CD4-positive, alpha-beta memory T cell (primary cell): ENCODE measurements at regions of chr4 and their contacts with region 1.

Region 1: DNA sequence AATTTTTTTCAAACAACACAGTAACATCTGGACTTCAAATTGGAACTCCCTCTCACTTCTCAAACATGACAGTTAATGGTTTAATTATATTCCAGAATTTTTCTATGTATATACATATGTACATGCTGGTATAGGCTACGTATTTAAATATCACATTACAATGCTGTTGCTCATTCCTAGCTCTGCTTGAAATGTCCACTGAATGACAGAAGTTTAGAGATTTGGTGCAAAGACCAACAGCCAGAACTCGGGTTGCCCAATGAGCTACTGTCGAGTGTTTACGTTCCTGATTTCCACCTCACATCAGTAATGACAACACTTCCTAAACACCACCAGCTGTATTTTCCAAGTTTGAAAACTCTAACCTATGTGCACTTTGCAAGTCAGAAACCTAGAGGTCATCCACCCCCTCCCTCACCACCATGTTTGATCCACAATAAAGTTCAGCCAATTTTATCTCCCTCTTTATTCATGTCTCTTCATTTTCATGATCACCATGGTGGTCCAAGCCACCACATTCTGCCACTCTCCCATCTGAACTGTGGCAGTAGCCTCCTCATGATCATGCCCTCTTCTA is 49.3 kb upstream of the RPL34 start:
- DNase-seq: no peak
- H3K4me3 ChIP-seq: no peak overlapping the region
- H3K4me3 Mint-ChIP-seq: peak overlapping the region in 1 of 8 donors; percentile 4
- H3K27ac ChIP-seq: no peak overlapping the region
- H3K27ac Mint-ChIP-seq: peak overlapping the region in 1 of 7 donors; percentile 27
- H3K4me1 ChIP-seq: peaks cover 7% of the 10 kb centered on the region
- H3K4me1 Mint-ChIP-seq: peaks cover 2 to 9% (median 5%) of the 10 kb centered on the region in 4 donors
- H3K27me3 ChIP-seq: no peaks in the 10 kb centered on the region
- H3K27me3 Mint-ChIP-seq: peaks cover 0 to 2% of the 10 kb centered on the region in 2 donors

Region 2: DNA sequence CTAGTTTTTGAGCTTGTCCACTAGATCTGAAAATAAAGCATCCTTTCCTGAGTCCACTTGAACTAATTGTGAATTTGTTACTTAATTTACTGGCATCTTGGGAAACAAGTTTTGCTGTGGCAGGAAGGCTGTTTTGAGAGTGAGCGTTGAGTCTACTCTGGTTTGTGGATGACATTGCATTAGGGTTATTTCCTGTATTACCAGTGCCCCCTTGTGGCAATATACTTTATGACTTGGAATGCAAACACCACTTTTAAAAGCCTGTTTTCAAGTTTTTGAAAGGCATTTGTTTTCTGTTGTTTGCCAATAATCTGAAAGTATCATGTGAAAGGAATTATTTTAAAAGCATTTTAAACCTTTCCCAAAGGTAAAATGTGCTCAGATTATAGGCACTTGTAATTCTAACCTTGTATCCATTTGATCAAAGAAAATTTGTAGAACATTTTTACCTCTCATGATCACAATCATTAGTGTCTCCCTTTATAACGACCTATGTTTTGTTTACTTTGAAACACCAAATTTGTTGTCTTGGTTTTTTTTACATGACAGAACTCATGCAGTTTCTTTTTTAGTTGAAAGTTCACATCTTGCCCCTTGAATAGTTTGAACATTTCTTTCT is 657.7 kb before region 1 on chr4:
- CTCF ChIA-PET with region 1: interaction called, 5 read pairs
- POLR2A ChIA-PET with region 1: no interaction called
- intact Hi-C with region 1: loop called (anchors 1 kb)
- DNase-seq: peak; percentile 57 to 62 (median 59)
- H3K4me3 ChIP-seq: no peak overlapping the region
- H3K4me3 Mint-ChIP-seq: no peak overlapping the region
- H3K27ac ChIP-seq: no peak overlapping the region
- H3K27ac Mint-ChIP-seq: no peak overlapping the region
- H3K4me1 ChIP-seq: no peaks in the 10 kb centered on the region
- H3K4me1 Mint-ChIP-seq: peaks cover 0 to 2% (median under 1%) of the 10 kb centered on the region in 4 donors
- H3K27me3 ChIP-seq: no peaks in the 10 kb centered on the region
- H3K27me3 Mint-ChIP-seq: peaks cover 1 to 7% of the 10 kb centered on the region in 2 donors

Region 3: DNA sequence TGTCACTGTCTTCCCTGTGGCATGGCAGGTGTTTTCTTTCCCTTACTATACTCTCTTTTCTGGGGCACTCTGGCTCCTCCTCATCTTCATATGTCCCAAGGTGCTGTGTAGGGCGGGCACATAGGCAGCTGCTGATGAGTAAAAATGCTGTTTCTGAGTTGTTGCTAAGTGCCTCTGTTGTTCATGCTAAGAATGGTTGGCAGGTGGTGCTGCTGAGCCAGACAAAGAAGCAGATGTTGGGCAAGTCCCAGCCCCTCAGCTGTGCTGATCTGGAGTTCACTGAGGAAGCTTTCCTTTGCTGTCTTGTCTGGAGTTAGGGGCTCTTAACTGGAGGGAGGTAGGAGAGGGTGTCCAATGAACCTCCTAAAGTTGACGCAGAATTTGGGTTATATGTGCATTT is 540.7 kb before region 1 on chr4:
- CTCF ChIA-PET with region 1: interaction called, 55 read pairs
- POLR2A ChIA-PET with region 1: interaction called, 5 read pairs
- intact Hi-C with region 1: loop called (anchors 1 kb)
- DNase-seq: peak; percentile 62 to 75 (median 70)
- H3K4me3 ChIP-seq: no peak overlapping the region
- H3K4me3 Mint-ChIP-seq: peak overlapping the region in 5 of 8 donors; percentile 50 to 76 (median 56)
- H3K27ac ChIP-seq: no peak overlapping the region
- H3K27ac Mint-ChIP-seq: peak overlapping the region; percentile 31 to 94 (median 84)
- H3K4me1 ChIP-seq: peaks cover 25% of the 10 kb centered on the region
- H3K4me1 Mint-ChIP-seq: peaks cover 21 to 40% (median 25%) of the 10 kb centered on the region in 4 donors
- H3K27me3 ChIP-seq: no peaks in the 10 kb centered on the region
- H3K27me3 Mint-ChIP-seq: no peaks in the 10 kb centered on the region

Region 4: GRCh38 chr4:108172753-108173598 is 398.1 kb before region 1 on chr4:
- CTCF ChIA-PET with region 1: interaction called, 5 read pairs
- POLR2A ChIA-PET with region 1: interaction called, 3 read pairs
- intact Hi-C with region 1: loop called (anchors 5 kb)
- DNase-seq: peak; percentile 63 to 71 (median 69)
- H3K4me3 ChIP-seq: peak overlapping the region; percentile 61 to 79
- H3K4me3 Mint-ChIP-seq: peak overlapping the region; percentile 89 to 96 (median 90)
- H3K27ac ChIP-seq: peak overlapping the region; percentile 50
- H3K27ac Mint-ChIP-seq: peak overlapping the region; percentile 47 to 94 (median 81)
- H3K4me1 ChIP-seq: peaks cover 43% of the 10 kb centered on the region
- H3K4me1 Mint-ChIP-seq: peaks cover 28 to 50% (median 37%) of the 10 kb centered on the region in 4 donors
- H3K27me3 ChIP-seq: peaks cover 14% of the 10 kb centered on the region
- H3K27me3 Mint-ChIP-seq: peaks cover 17 to 25% of the 10 kb centered on the region in 2 donors

Region 5: GRCh38 chr4:108443585-108443984 is 127.5 kb before region 1 on chr4:
- CTCF ChIA-PET with region 1: no interaction called
- POLR2A ChIA-PET with region 1: no interaction called
- intact Hi-C with region 1: no loop called
- DNase-seq: no peak
- H3K4me3 ChIP-seq: no peak overlapping the region
- H3K4me3 Mint-ChIP-seq: no peak overlapping the region
- H3K27ac ChIP-seq: no peak overlapping the region
- H3K27ac Mint-ChIP-seq: peak overlapping the region in 1 of 7 donors; percentile 48
- H3K4me1 ChIP-seq: peaks cover 3% of the 10 kb centered on the region
- H3K4me1 Mint-ChIP-seq: peaks cover 11 to 41% (median 23%) of the 10 kb centered on the region in 4 donors
- H3K27me3 ChIP-seq: no peaks in the 10 kb centered on the region
- H3K27me3 Mint-ChIP-seq: peaks cover 0 to 1% of the 10 kb centered on the region in 2 donors

Region 6: GRCh38 chr4:108527723-108528122 is 43.4 kb before region 1 on chr4:
- CTCF ChIA-PET with region 1: interaction called, 10 read pairs
- POLR2A ChIA-PET with region 1: no interaction called
- intact Hi-C with region 1: loop called (anchors 2 kb)
- DNase-seq: peak in 4 of 5 donors; percentile 28 to 46 (median 40)
- H3K4me3 ChIP-seq: peak overlapping the region in 1 of 2 donors; percentile 15
- H3K4me3 Mint-ChIP-seq: peak overlapping the region; percentile 62 to 77 (median 70)
- H3K27ac ChIP-seq: no peak overlapping the region
- H3K27ac Mint-ChIP-seq: peak overlapping the region; percentile 30 to 87 (median 66)
- H3K4me1 ChIP-seq: peaks cover 58% of the 10 kb centered on the region
- H3K4me1 Mint-ChIP-seq: peaks cover 31 to 72% (median 57%) of the 10 kb centered on the region in 4 donors
- H3K27me3 ChIP-seq: no peaks in the 10 kb centered on the region
- H3K27me3 Mint-ChIP-seq: no peaks in the 10 kb centered on the region

Region 7: DNA sequence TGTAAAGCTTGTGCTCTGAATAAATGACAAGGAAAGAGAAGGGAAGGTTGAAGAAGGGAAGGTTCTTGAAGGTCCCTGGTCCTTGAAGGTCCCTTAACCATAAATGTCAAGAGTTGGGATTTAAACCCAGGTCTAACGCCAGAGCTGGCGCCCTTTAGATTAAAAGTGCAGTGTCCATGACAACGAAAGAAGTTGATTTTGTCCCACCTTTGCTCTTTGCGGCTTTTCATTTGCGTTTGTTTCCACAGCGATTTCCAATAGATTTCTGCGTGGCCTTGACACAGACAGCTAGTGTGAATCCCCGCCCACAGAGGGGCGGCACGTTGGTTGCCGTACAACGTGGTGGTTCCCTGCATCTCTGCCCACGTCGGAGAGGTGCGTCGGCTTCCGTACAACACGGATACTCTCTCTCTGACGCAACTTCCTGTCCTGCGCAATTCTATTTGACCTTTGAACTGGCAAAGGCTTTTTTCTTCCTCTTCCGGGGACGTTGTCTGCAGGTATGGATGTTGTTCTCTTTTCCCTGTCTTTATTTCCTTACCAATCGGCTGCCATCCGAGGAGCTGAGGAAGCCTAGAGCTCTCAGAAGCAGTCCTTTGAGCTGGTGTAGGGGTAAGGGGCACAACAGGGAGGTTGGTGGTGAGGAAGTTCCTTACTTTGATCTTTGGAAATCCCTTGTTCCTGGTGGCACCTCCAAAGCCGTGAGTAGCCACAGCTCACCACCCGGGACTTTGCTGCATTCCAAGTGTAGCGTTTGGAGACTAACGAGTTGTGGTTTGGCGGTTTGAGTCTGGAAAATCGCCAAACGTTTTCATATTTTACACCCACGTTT is 49.2 kb after region 1 on chr4 and contains the start of gene RPL34:
- CTCF ChIA-PET with region 1: interaction called, 13 read pairs
- POLR2A ChIA-PET with region 1: interaction called, 4 read pairs
- intact Hi-C with region 1: loop called (anchors 2 kb)
- DNase-seq: peak; percentile 95 to 99 (median 96)
- H3K4me3 ChIP-seq: peak within 1 kb of the TSS; percentile 66 to 91
- H3K4me3 Mint-ChIP-seq: peak within 1 kb of the TSS; percentile 87 to 97 (median 96)
- H3K27ac ChIP-seq: peak within 1 kb of the TSS; percentile 79
- H3K27ac Mint-ChIP-seq: peak within 1 kb of the TSS; percentile 92 to 99 (median 98)
- H3K4me1 ChIP-seq: peaks cover 49% of the 10 kb centered on the region
- H3K4me1 Mint-ChIP-seq: peaks cover 37 to 58% (median 47%) of the 10 kb centered on the region in 4 donors
- H3K27me3 ChIP-seq: no peaks in the 10 kb centered on the region
- H3K27me3 Mint-ChIP-seq: no peaks in the 10 kb centered on the region
- total RNA-seq, gene RPL34: 2,902 to 3,093 TPM

Region 8: DNA sequence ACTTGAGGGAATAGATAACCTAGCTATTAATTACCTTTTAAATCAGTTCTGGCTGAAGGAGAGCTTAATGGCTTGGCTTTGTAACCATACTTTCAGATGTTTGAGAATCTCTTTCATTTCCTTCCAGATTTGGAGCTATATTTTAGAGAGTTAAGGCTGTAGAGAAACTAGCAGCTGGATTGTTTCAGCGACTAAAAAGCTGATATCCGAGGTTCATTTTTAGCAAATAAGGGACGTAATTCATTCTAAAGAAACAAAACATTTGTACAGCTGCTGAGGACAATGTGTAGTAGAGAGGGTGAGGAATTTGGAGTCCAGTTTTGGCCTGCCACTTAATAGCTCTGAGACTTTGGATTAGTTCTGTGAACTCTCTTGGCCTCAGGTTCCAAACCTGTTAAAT is 91.5 kb after region 1 on chr4:
- CTCF ChIA-PET with region 1: no interaction called
- POLR2A ChIA-PET with region 1: no interaction called
- intact Hi-C with region 1: no loop called
- DNase-seq: no peak
- H3K4me3 ChIP-seq: no peak overlapping the region
- H3K4me3 Mint-ChIP-seq: no peak overlapping the region
- H3K27ac ChIP-seq: no peak overlapping the region
- H3K27ac Mint-ChIP-seq: peak overlapping the region in 2 of 7 donors; percentile 0 to 6
- H3K4me1 ChIP-seq: no peaks in the 10 kb centered on the region
- H3K4me1 Mint-ChIP-seq: peaks cover 0 to 2% (median under 1%) of the 10 kb centered on the region in 4 donors
- H3K27me3 ChIP-seq: no peaks in the 10 kb centered on the region
- H3K27me3 Mint-ChIP-seq: no peaks in the 10 kb centered on the region

Region 9: GRCh38 chr4:109009909-109010308 is 438.8 kb after region 1 on chr4:
- CTCF ChIA-PET with region 1: no interaction called
- POLR2A ChIA-PET with region 1: no interaction called
- intact Hi-C with region 1: no loop called
- DNase-seq: no peak
- H3K4me3 ChIP-seq: no peak overlapping the region
- H3K4me3 Mint-ChIP-seq: no peak overlapping the region
- H3K27ac ChIP-seq: no peak overlapping the region
- H3K27ac Mint-ChIP-seq: no peak overlapping the region
- H3K4me1 ChIP-seq: no peaks in the 10 kb centered on the region
- H3K4me1 Mint-ChIP-seq: peaks cover 0 to 4% (median 0%) of the 10 kb centered on the region in 4 donors
- H3K27me3 ChIP-seq: no peaks in the 10 kb centered on the region
- H3K27me3 Mint-ChIP-seq: no peaks in the 10 kb centered on the region